H1 (cell line): ENCODE measurements at regions of chr3 and their contacts with region 1.

Region 1: DNA sequence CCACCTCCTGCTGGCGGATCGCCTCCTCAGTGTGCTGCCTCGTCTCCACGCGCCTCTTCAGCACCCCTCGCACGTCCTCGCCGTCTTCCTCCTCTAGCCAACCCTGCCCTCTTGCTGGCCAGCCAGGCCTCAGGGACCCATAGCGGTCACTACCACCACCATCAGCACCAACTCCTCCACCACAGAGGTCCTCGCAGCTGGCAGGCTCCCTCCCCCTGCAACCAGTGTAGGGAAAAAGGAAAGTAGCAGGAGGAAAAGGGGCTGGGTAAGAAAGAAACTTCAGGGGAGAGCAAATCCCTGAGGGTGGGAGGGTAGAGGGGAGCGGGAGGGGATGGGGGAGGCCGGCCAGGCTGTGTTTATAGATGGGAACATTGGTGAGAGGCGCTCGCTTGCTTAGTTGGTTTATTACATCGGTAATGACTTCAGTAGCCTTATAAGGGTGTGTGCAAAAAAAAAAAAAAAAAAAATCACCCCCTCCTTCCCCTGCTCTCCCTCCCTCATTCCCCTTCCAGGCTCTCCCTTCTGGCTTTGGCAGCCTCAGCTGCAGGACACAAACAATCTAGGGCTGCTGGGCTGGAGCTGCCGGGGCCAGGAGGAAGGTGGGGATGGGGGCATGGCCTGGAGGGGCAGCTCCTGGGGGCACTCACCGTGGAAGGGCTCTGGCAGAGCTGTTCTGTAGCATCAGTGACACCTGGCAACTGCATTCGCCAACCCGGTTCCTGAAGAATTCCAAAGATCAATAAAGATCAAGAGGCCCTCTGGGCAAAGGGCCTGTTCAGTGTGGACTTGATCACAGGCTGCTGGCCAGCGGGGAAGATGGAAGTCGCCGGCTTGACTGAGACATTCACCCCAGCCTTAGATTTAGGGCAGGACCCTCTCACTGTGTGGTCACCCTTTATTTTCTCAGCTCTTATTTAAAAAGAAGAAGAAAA is 116.2 kb upstream of the HACD2 start:
- DNase-seq: no peak
- H3K4me3 ChIP-seq: no peak overlapping the region
- H3K27ac ChIP-seq: no peak overlapping the region
- H3K4me1 ChIP-seq: no peaks in the 10 kb centered on the region
- H3K27me3 ChIP-seq: no peaks in the 10 kb centered on the region
- CTCF ChIP-seq: no peak
- EP300 ChIP-seq: no peak
- POLR2A ChIP-seq: no peak
- RAD21 ChIP-seq: no peak

Region 2: GRCh38 chr3:123679712-123680386 is 21.2 kb before region 1 on chr3:
- CTCF ChIA-PET with region 1: interaction called, 52 read pairs
- POLR2A ChIA-PET with region 1: no interaction called
- DNase-seq: no peak
- H3K4me3 ChIP-seq: no peak overlapping the region
- H3K27ac ChIP-seq: no peak overlapping the region
- H3K4me1 ChIP-seq: peaks cover 0 to 7% (median 1%) of the 10 kb centered on the region in 4 experiments; a peak in 1 of 7 replicates
- H3K27me3 ChIP-seq: no peaks in the 10 kb centered on the region
- CTCF ChIP-seq: no peak
- EP300 ChIP-seq: no peak
- POLR2A ChIP-seq: no peak
- RAD21 ChIP-seq: no peak

Region 3: DNA sequence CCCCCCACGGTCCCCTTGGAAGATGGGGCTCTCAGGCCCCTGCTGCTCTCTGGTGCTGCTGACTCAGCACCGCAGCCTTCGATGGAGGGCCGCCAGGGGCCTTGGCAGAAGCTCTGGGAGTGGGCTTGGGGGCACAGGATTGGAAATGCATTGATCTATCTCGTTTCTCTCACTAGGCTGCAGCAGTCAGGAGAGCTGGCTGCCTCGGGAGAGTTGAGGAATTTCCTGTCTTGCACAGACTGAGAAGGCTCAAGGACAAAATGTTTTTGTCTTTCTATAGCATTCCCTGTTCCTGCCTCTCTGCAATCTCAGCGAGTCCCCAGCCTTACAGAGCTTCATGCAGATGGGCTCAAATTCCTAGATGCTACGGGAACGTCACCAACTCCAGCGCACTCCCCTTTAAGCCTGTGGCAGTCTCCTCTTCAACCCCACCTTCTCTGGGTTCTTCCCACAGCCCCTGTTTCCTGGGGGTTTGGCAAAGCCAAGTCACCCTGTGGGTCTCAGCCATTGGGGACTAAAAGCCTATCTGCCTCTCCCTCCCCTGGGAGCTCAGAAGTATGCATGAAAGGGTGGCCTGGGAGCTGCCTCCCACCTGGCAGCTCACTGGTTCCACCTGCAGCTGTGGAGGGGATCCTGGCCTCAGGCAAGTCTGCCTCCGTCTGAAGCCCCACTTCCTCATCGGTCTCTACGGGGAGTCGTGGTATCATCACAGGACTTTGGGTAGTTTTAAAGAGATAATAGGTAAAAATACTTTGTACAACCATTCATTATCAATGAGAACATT is 11.2 kb after region 1 on chr3:
- CTCF ChIA-PET with region 1: interaction called, 23 read pairs
- POLR2A ChIA-PET with region 1: interaction called, 3 read pairs
- DNase-seq: no peak
- H3K4me3 ChIP-seq: no peak overlapping the region
- H3K27ac ChIP-seq: no peak overlapping the region
- H3K4me1 ChIP-seq: peaks cover 0 to 3% (median 2%) of the 10 kb centered on the region in 4 experiments; a peak in 2 of 7 replicates
- H3K27me3 ChIP-seq: no peaks in the 10 kb centered on the region
- CTCF ChIP-seq: no peak
- EP300 ChIP-seq: no peak
- POLR2A ChIP-seq: no peak
- RAD21 ChIP-seq: no peak